PC-9 (cell line): ENCODE measurements at regions of chr14 and their contacts with region 1.

Region 1: DNA sequence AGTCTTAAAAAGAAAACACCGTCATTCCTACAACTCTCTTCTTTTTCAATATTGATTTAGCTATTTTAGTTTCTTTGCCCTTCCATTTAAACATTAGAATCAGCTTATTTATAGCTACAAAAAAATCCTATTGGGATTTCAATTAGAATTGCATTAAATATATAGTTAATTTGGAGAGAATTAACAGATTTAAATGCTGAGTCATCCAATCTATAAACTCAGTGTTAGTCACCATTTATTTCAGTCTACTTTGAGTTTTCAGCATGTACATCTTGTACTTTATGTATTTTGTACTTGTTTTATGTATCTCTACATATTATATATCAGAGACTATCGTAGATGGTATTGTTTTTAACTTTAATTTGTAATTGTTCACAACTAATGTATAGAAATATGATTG is 460.0 kb downstream of the KCNH5 start:
- DNase-seq: no peak
- H3K4me3 ChIP-seq: no peak overlapping the region
- H3K27ac ChIP-seq: no peak overlapping the region
- H3K4me1 ChIP-seq: no peaks in the 10 kb centered on the region
- H3K27me3 ChIP-seq: no peaks in the 10 kb centered on the region
- CTCF ChIP-seq: no peak

Region 2: GRCh38 chr14:62599616-62600385 is 14.6 kb after region 1 on chr14:
- CTCF ChIA-PET with region 1: no interaction called
- POLR2A ChIA-PET with region 1: interaction called, 11 read pairs
- intact Hi-C with region 1: no loop called
- DNase-seq: no peak
- H3K4me3 ChIP-seq: no peak overlapping the region
- H3K27ac ChIP-seq: no peak overlapping the region
- H3K4me1 ChIP-seq: no peaks in the 10 kb centered on the region
- H3K27me3 ChIP-seq: no peaks in the 10 kb centered on the region
- CTCF ChIP-seq: no peak